ENCODE measurements at regions of chr13 and their contacts with region 1.

Region 1: GRCh38 chr13:39616087-39616694 is 13.2 kb upstream of the LHFPL6 start:
- DNase-seq: peak; percentile 39
- H3K4me3 Mint-ChIP-seq: no peak overlapping the region
- H3K27ac Mint-ChIP-seq: no peak overlapping the region
- H3K4me1 Mint-ChIP-seq: no peaks in the 10 kb centered on the region
- H3K27me3 Mint-ChIP-seq: peaks cover 5% of the 10 kb centered on the region

Region 2: DNA sequence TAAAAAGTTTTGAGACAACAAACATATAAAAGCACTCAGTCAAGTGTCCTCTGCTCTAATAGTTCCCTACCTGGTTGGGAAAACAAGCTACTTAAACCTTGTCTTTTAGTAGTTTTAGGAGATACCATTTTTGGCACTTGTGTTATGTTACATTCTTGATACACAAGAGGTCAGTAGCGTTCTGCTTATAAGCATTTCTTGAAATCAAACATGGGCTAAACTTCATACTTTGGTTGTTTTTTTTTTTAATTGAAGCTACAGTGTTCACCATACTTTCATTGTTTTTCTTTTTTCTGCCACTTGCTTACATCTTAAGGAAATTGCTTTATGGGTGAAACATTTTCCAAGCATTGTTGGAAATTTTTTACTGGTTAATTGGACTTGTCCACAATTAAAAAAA is 565.0 kb before region 1 on chr13:
- CTCF ChIA-PET with region 1: interaction called, 30 read pairs
- POLR2A ChIA-PET with region 1: no interaction called
- intact Hi-C with region 1: loop called (anchors 2 kb)
- DNase-seq: no peak
- H3K4me3 Mint-ChIP-seq: no peak overlapping the region
- H3K27ac Mint-ChIP-seq: no peak overlapping the region
- H3K4me1 Mint-ChIP-seq: peaks cover 3% of the 10 kb centered on the region
- H3K27me3 Mint-ChIP-seq: no peaks in the 10 kb centered on the region

Region 3: GRCh38 chr13:39263033-39263432 is 353.2 kb before region 1 on chr13:
- CTCF ChIA-PET with region 1: interaction called, 17 read pairs
- POLR2A ChIA-PET with region 1: no interaction called
- intact Hi-C with region 1: loop called (anchors 1 kb)
- DNase-seq: peak; percentile 63
- H3K4me3 Mint-ChIP-seq: no peak overlapping the region
- H3K27ac Mint-ChIP-seq: no peak overlapping the region
- H3K4me1 Mint-ChIP-seq: peaks cover 19% of the 10 kb centered on the region
- H3K27me3 Mint-ChIP-seq: no peaks in the 10 kb centered on the region

Region 4: DNA sequence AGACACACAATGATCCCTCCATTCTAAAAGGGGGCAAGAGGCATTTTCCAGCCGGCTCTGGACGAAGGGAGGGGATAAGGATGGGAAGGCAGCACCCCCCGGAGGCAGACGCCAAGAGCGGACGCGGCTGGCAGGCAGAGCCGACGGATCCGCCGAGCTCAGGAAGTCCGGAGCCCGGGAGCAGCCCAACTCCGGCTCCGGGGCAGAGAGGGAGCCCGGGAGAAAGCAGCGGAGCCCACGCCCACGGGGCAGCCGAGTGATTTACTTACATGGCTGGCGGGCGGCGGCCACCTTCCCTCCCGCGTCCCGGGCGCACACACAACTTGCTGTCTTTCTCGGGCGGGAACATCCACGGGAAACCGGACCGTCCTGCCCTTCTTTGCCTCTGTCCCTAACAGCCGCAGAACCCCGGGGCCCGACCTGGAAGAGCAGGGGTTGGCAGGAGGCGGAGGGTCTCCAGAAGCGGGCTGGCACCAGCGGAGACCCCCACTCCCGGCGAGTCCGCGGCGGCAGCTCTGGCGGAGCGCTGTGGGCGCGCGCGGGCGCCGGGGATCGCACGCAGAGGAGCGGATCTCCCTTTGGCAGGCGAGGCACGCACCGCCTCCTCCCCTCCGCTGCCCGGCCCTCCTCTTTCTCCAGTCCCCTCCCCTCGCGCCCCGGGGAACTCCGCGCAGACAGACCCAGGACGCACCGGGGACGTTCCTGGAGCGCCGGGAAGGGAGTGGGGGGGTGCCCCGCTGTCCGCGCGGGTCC is 13.4 kb before region 1 on chr13 and contains the start of gene LHFPL6:
- CTCF ChIA-PET with region 1: interaction called, 24 read pairs
- POLR2A ChIA-PET with region 1: no interaction called
- intact Hi-C with region 1: no loop called
- DNase-seq: peak; percentile 83
- H3K4me3 Mint-ChIP-seq: peak within 1 kb of the TSS; percentile 76
- H3K27ac Mint-ChIP-seq: no peak within 1 kb of the TSS
- H3K4me1 Mint-ChIP-seq: peaks cover 14% of the 10 kb centered on the region
- H3K27me3 Mint-ChIP-seq: peaks cover 35% of the 10 kb centered on the region
- total RNA-seq, gene LHFPL6: 2.7 to 3.0 TPM

Region 5: DNA sequence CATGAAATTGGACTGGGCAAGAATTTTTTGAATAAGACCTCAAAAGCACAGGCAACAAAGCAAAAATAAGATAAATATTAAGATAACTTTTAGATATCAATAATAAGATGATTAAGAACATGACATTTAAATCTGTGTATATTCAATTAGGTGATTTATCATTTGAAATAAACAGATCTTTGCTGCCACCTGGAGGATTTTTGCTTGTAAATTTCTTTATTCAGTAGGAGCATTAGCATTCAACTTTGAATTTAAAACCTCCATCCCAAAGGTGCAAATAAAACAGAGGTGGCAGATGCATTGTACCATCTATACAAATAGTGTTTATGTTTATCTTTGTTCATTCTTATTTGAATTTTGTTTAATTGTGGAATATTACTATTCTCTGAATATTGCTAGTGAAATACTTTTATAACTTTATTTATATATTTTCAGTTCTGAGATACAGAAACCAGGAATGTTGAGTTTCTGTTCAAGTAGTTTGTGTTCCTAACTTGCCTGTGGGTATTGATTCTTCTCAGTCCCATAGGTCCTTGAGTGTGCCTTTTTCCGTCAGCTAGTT is 60.2 kb after region 1 on chr13:
- CTCF ChIA-PET with region 1: interaction called, 12 read pairs
- POLR2A ChIA-PET with region 1: no interaction called
- intact Hi-C with region 1: loop called (anchors 5 kb)
- DNase-seq: no peak
- H3K4me3 Mint-ChIP-seq: no peak overlapping the region
- H3K27ac Mint-ChIP-seq: no peak overlapping the region
- H3K4me1 Mint-ChIP-seq: no peaks in the 10 kb centered on the region
- H3K27me3 Mint-ChIP-seq: no peaks in the 10 kb centered on the region